ENCODE measurements at regions of chr1 and their contacts with region 1.

Region 1: GRCh38 chr1:53182111-53182593 is 14.5 kb upstream of the CPT2 start:
- DNase-seq: peak; percentile 69
- H3K4me3 ChIP-seq: no peak overlapping the region
- H3K27ac ChIP-seq: peak overlapping the region; percentile 58
- H3K4me1 ChIP-seq: peaks cover 45% of the 10 kb centered on the region
- H3K27me3 ChIP-seq: no peaks in the 10 kb centered on the region

Region 2: DNA sequence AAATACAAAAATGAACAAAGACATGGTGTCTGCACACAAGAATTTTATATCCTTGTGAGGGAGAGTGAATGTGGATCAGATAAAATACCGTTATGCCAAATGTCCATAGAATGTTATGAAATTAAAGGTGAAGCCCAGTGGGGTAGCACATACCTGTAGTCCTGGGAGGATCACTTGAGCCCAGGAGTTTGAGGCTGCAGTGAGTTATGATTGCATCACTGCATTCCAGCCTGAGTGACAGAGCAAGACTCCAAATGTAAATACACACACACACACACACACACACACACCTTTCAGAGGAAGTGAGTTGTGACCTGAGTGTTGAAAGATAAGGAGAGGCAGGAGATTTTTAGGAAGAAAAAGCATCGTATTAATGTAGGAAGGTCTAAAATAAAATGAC is 367.7 kb before region 1 on chr1:
- in situ Hi-C with region 1: loop called (anchors 10 kb)
- DNase-seq: no peak
- H3K4me3 ChIP-seq: no peak overlapping the region
- H3K27ac ChIP-seq: no peak overlapping the region
- H3K4me1 ChIP-seq: no peaks in the 10 kb centered on the region
- H3K27me3 ChIP-seq: no peaks in the 10 kb centered on the region

Measured in GM23248 (cell line).